ENCODE measurements at regions of chr2 and their contacts with region 1.

Region 1: GRCh38 chr2:179974743-179975142 is 32.4 kb downstream of the CWC22 start:
- DNase-seq: peak in 1 of 2 experiments; percentile 64
- H3K4me3 ChIP-seq: no peak overlapping the region
- H3K27ac ChIP-seq: no peak overlapping the region
- H3K4me1 ChIP-seq: no peaks in the 10 kb centered on the region
- H3K27me3 ChIP-seq: no peaks in the 10 kb centered on the region
- CTCF ChIP-seq: no peak

Region 2: GRCh38 chr2:179995741-179996515 is 21.2 kb after region 1 on chr2:
- CTCF ChIA-PET with region 1: no interaction called
- POLR2A ChIA-PET with region 1: interaction called, 3 read pairs
- intact Hi-C with region 1: loop called (anchors 2 kb)
- DNase-seq: no peak
- H3K4me3 ChIP-seq: no peak overlapping the region
- H3K27ac ChIP-seq: no peak overlapping the region
- H3K4me1 ChIP-seq: no peaks in the 10 kb centered on the region
- H3K27me3 ChIP-seq: no peaks in the 10 kb centered on the region
- CTCF ChIP-seq: no peak

Region 3: GRCh38 chr2:180203972-180204371 is 229.2 kb after region 1 on chr2:
- CTCF ChIA-PET with region 1: no interaction called
- POLR2A ChIA-PET with region 1: no interaction called
- intact Hi-C with region 1: no loop called
- DNase-seq: no peak
- H3K4me3 ChIP-seq: no peak overlapping the region
- H3K27ac ChIP-seq: no peak overlapping the region
- H3K4me1 ChIP-seq: no peaks in the 10 kb centered on the region
- H3K27me3 ChIP-seq: no peaks in the 10 kb centered on the region
- CTCF ChIP-seq: no peak